ENCODE measurements at regions of chr5 and their contacts with region 1.

Region 1: GRCh38 chr5:109688971-109689739 is 572 bp upstream of the MAN2A1 start:
- DNase-seq: peak; percentile 87 to 95 (median 89)
- ATAC-seq: peak; percentile 91 to 97 (median 96)
- H3K4me3 ChIP-seq: peak overlapping the region; percentile 62 to 98 (median 88)
- H3K27ac ChIP-seq: peak overlapping the region; percentile 86 to 99 (median 95)
- H3K4me1 ChIP-seq: peaks cover 0 to 34% (median 11%) of the 10 kb centered on the region in 12 donors
- H3K27me3 ChIP-seq: no peaks in the 10 kb centered on the region
- CTCF ChIP-seq: peak in 2 of 12 donors; percentile 4 to 25
- POLR2A ChIP-seq: peak; percentile 80 to 93

Region 2: DNA sequence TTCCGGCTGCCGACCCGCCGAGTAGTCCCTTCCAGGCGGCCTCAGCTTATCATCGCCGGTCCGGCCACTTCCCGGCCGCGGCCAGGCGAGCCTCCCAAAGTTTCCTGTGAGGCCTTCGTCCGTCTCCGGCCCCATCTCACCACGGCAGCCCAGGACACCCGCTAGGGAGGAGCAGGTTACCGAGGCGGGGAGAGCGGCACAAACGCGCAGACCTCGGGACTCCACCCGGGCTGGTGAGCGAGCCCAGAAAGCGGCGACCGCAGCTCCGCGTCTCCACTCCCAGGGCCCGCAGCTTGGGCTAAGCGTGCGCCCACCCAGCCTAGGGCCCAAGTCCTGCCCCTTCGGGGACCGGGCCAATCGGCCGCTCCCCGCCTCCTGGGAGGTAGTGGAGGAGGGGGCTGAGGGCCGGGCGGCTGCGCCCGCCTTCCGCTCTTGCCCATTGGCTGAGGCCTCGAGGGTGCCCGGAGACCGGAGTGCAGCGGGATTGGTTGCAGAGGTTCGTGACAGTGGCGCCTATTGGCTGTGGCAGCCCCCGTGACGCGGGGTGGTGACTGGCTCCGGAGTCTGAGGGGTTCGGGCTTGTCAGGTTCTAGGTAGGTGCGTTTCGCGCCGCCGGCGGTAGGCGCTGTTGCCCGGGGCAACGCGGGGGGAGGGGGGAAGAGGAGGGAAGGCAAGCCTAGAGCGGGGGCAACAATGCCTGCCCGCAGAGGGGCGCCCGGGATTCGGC is 940.6 kb before region 1 on chr5:
- intact Hi-C with region 1: loop called in 1 of 10 experiments (anchors 10 kb)
- DNase-seq: peak; percentile 99 to 100 (median 99)
- ATAC-seq: peak; percentile 98 to 99 (median 98)
- H3K4me3 ChIP-seq: peak overlapping the region; percentile 83 to 98 (median 91)
- H3K27ac ChIP-seq: peak overlapping the region; percentile 91 to 100 (median 97)
- H3K4me1 ChIP-seq: peaks cover 0 to 31% (median 8%) of the 10 kb centered on the region in 12 donors
- H3K27me3 ChIP-seq: no peaks in the 10 kb centered on the region
- CTCF ChIP-seq: peak in 7 of 12 donors; percentile 17 to 34 (median 21)
- POLR2A ChIP-seq: peak; percentile 89 to 99

Region 3: DNA sequence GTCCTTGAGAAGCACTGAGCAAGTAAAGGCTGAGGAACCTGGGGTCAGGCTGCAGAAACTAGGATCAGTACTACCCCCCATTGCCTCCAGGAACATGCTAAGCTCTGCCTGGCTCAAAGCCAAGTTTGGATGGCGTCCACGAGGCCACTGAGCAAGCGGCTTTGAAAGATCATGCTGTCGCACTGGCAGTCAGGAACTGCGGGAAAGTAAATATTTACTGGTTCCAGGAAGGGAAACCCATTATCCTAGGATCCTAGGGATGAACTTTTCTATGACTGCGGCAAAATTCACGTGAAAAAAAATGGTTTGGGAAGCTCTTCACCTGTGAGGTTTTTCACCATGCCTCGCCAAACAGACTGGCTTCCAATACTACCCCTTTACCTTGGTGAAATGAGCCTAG is 204.1 kb before region 1 on chr5:
- intact Hi-C with region 1: loop called in 1 of 10 experiments (anchors 10 kb)
- DNase-seq: peak; percentile 48 to 79 (median 64)
- ATAC-seq: peak; percentile 59 to 87 (median 69)
- H3K4me3 ChIP-seq: peak overlapping the region in 1 of 12 donors; percentile 3
- H3K27ac ChIP-seq: no peak overlapping the region
- H3K4me1 ChIP-seq: peaks cover 0 to 25% (median 10%) of the 10 kb centered on the region in 12 donors
- H3K27me3 ChIP-seq: no peaks in the 10 kb centered on the region
- CTCF ChIP-seq: no peak
- POLR2A ChIP-seq: no peak

Region 4: GRCh38 chr5:109739741-109740728 is 50.9 kb after region 1 on chr5:
- intact Hi-C with region 1: loop called in 1 of 10 experiments (anchors 10 kb)
- DNase-seq: peak in 1 of 5 donors; percentile 27
- ATAC-seq: peak in 2 of 4 donors; percentile 8 to 34
- H3K4me3 ChIP-seq: no peak overlapping the region
- H3K27ac ChIP-seq: peak overlapping the region in 1 of 12 donors; percentile 6
- H3K4me1 ChIP-seq: peaks cover 0 to 46% (median 18%) of the 10 kb centered on the region in 12 donors
- H3K27me3 ChIP-seq: no peaks in the 10 kb centered on the region
- CTCF ChIP-seq: no peak
- POLR2A ChIP-seq: no peak

Region 5: DNA sequence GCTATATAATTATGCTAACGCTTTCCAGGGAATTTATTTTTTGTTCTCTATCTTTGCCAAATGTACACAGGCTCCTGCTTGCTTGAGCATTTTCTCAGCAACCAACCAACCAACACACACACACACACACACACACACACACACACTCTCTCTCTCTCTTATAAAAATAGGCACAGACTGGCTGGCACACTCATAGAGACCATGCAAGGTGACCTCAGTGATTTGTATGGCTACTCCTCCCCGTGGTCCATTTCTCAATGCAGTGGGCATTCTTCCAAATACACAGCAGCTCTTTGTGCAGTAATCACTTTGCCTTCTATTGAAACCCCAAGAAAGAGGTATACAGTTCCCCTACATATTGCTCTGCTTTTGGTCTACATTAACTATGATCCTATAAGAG is 416.5 kb after region 1 on chr5:
- intact Hi-C with region 1: loop called in 1 of 10 experiments (anchors 10 kb)
- DNase-seq: peak in 4 of 5 donors; percentile 18 to 47 (median 28)
- ATAC-seq: peak; percentile 32 to 95 (median 90)
- H3K4me3 ChIP-seq: no peak overlapping the region
- H3K27ac ChIP-seq: no peak overlapping the region
- H3K4me1 ChIP-seq: peaks cover 0 to 6% (median 0%) of the 10 kb centered on the region in 12 donors
- H3K27me3 ChIP-seq: peaks cover 0 to 8% (median 0%) of the 10 kb centered on the region in 9 donors
- CTCF ChIP-seq: no peak
- POLR2A ChIP-seq: no peak

Region 6: DNA sequence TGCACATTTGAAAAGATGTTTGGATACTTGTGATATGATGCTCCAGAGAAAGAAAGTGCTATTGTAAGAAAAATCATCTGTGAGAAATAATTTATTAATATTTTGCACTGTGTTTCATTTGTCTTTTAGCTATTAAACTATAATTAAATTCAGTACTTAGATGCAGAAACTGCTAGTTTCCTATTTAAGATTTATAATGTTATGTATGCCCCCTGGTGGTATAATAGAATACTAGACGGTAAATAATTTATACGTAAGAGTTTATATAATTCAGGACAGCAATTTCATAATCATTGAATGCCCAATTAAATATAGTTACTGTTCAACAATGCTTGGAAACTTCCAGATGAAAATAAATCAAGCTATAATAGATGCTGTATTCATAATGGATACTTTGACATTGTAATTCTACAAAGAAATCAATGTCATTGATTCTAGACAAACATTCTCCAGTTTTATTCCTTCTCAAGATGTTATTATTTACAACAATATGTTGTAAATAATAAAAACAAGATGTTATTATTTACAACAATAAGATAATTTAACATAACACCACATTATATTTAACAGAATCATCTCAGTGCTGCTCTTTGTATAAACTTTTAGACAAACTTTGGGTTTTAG is 936.3 kb after region 1 on chr5:
- intact Hi-C with region 1: loop called in 1 of 10 experiments (anchors 2 kb)
- DNase-seq: no peak
- ATAC-seq: no peak
- H3K4me3 ChIP-seq: no peak overlapping the region
- H3K27ac ChIP-seq: no peak overlapping the region
- H3K4me1 ChIP-seq: no peaks in the 10 kb centered on the region
- H3K27me3 ChIP-seq: no peaks in the 10 kb centered on the region
- CTCF ChIP-seq: peak; percentile 33 to 66 (median 52)
- POLR2A ChIP-seq: no peak